HEK293 (cell line): ENCODE measurements at regions of chrX and their contacts with region 1.

Region 1: GRCh38 chrX:69222103-69223090 is 57.1 kb upstream of the PJA1 start:
- H3K4me3 ChIP-seq: no peak overlapping the region
- H3K27ac ChIP-seq: no peak overlapping the region
- H3K4me1 ChIP-seq: no peaks in the 10 kb centered on the region
- CTCF ChIP-seq: peak; percentile 73

Region 2: DNA sequence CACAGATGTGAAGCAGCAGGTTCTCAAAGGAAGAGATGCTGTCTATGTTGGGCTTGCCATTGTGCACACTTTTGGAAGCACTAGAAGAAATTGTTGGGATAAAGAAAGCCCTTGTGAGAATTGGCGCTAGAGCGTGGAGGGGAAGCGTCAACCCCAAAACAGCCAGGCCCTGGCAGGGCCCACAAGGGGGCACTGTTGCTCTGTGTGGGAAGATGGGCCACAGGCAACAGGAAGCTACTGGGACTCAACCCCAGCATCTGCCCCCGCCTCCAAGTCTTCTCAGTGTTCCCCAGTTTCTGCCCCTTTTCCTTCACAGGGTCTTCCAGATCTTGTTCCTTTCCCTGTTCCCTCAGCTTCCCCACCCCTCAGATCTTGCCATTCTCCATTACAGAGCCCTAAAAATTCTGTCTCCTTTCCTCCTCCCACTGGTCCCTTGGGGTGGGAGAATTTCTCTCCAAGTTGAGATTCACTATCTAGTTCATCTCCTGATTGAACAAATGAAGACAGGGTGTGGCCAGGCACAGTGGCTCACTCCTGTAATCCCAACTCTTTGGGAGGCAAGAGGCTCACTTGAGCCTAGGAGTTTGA is 489.4 kb before region 1 on chrX:
- CTCF ChIA-PET with region 1: interaction called, 24 read pairs
- POLR2A ChIA-PET with region 1: no interaction called
- H3K4me3 ChIP-seq: no peak overlapping the region
- H3K27ac ChIP-seq: no peak overlapping the region
- H3K4me1 ChIP-seq: no peaks in the 10 kb centered on the region
- CTCF ChIP-seq: peak; percentile 83

Region 3: GRCh38 chrX:69093960-69094871 is 128.2 kb before region 1 on chrX:
- CTCF ChIA-PET with region 1: interaction called, 14 read pairs
- POLR2A ChIA-PET with region 1: no interaction called
- H3K4me3 ChIP-seq: no peak overlapping the region
- H3K27ac ChIP-seq: no peak overlapping the region
- H3K4me1 ChIP-seq: no peaks in the 10 kb centered on the region
- CTCF ChIP-seq: peak; percentile 60; the same call in 1 of the 2 replicates

Region 4: DNA sequence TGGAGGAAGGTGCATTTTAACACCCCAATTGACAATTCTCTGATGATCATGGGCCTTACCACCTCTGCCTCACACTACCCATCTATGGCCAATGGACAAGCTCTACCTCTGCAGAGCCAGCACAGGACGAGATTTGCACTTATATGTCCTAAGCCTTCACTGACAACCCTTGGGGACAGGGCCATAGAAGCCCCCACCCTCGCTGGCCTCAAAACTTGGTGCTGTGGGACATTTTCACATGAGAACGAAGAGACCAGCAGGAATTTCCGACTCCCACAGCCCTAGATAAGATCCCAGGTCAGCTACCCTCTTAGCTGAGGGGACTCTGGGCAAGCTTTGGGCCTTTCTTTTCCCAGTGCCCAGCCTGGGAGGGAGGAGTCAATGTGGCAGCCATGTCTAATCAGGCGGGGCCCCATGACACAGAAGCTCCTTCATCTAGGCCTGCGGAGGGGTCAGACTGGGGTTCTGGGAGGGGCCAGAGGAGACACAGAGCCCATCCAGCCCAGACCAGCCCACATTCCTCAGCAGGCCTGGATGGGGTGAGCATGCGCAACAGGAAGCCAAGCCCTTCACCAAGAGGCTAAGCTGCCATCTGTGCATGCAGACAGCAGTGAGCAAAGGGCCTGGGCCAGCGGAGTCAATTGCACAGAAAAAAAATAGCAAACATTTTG is 69.2 kb before region 1 on chrX:
- CTCF ChIA-PET with region 1: interaction called, 10 read pairs
- POLR2A ChIA-PET with region 1: no interaction called
- H3K4me3 ChIP-seq: no peak overlapping the region
- H3K27ac ChIP-seq: no peak overlapping the region
- H3K4me1 ChIP-seq: no peaks in the 10 kb centered on the region
- CTCF ChIP-seq: no peak

Region 5: GRCh38 chrX:69238114-69238886 is 15.9 kb after region 1 on chrX:
- CTCF ChIA-PET with region 1: interaction called, 34 read pairs
- POLR2A ChIA-PET with region 1: no interaction called
- H3K4me3 ChIP-seq: no peak overlapping the region
- H3K27ac ChIP-seq: no peak overlapping the region
- H3K4me1 ChIP-seq: no peaks in the 10 kb centered on the region
- CTCF ChIP-seq: no peak